ENCODE measurements at regions of chr2 and their contacts with region 1.

Region 1: DNA sequence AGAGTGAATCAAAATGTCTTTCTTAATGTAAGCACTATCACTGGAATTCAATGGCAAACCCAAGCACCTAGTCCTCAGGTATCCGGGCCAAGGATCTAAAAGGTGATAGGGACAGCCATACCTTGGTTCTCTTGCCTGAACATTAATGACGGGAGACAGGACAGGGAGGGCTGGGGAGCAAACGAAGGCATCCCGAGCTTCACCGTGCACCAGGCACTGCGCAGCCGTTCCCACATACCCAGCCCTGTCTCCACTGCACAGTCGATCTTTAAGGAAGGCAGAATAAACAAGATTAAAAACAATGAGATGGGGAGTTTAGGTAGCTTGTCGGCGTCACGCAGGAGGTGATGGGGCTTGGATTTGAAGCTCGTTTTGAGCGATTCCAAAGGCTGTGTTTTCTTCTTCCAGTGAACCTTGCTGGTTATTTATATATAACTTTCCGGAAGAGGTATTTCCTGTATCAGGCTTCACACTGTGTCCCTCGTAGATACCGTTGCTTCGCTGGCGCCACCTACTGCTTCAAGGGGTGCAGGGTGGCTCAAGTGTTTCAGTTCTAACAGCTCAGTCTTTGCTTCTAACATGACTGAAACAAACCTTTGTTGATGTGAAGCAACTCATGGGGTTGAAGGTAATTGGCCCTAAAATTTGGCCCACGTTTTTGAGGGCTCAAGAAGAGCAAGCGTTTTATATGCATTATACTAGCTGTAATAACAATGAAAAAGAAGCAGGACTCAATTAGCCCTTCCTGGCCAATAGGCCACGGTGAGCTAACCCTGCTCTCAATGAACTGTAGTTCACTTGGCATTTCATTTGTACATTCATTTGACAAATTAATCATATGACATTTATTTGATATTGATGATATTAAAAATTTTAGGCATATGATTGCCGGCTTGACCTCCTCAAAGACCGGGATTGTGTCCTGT is 77.4 kb downstream of the DCDC2C start:
- DNase-seq: no peak
- H3K4me3 ChIP-seq: no peak overlapping the region
- H3K27ac ChIP-seq: no peak overlapping the region
- H3K27me3 ChIP-seq: no peaks in the 10 kb centered on the region
- CTCF ChIP-seq: peak; percentile 75

Region 2: GRCh38 chr2:3692381-3692780 is 88.4 kb before region 1 on chr2:
- CTCF ChIA-PET with region 1: interaction called, 18 read pairs
- POLR2A ChIA-PET with region 1: no interaction called
- DNase-seq: no peak
- H3K4me3 ChIP-seq: no peak overlapping the region
- H3K27ac ChIP-seq: no peak overlapping the region
- H3K27me3 ChIP-seq: peaks cover 6% of the 10 kb centered on the region
- CTCF ChIP-seq: peak; percentile 59

Region 3: DNA sequence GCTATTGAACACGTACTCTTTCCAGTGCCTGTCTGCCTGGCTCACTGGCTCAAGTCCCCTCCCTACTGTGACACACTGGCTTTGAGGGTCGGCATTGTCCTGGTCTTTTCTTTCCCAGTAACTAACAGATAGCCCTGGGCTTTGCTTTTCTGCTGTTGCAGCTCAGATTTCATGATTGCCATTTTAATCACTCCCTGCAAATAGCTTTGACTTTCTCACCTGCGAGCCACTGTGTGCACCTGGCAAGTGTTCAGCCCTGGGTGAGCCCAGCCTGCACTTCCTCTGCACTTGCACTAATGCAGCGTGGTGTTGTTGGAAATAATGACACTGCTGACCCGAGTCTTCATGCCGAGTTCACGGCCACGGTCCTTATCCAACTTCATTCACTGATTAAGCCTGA is 24.4 kb before region 1 on chr2:
- CTCF ChIA-PET with region 1: interaction called, 10 read pairs
- POLR2A ChIA-PET with region 1: no interaction called
- DNase-seq: no peak
- H3K4me3 ChIP-seq: no peak overlapping the region
- H3K27ac ChIP-seq: no peak overlapping the region
- H3K27me3 ChIP-seq: peaks cover 7% of the 10 kb centered on the region
- CTCF ChIP-seq: no peak

Region 4: DNA sequence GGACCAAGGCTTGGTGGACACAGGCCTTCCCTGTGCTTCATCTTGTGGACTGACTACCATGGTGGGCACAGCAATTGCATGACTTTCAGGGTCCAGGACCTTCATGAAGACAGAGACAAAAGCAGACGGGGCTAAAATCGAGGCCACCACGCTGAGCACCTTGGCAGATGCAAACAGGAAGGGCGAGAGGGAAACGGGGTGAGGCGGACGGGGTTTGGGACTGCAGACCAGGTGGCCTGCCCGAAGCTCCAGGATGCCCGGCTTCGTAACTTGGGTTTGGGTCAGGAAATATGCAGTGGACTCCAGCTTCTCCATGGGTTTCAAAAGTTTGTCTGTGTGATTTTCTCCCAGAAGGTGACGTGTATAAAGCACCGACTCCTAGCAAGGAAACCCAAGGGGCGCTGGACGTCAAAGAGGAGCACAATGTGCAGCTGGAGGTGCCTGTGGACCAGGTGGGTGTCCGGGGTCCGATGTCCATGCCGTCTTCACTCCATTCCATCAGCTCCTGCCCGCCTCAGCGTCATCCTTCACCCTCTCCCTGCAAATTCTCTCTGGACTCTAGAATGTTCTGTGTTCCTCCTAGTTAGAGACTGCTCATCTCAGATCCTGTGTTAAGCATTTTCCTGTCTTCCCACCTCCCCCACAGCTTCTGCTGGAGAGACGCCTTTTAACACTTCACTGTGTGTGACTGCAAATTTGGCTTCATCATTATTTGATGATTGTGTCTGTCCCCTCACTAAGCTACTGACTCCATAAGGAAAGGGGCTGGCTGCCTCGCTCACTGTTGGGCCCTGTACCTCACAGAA is 11.6 kb before region 1 on chr2:
- CTCF ChIA-PET with region 1: interaction called, 18 read pairs
- POLR2A ChIA-PET with region 1: no interaction called
- DNase-seq: no peak
- H3K4me3 ChIP-seq: no peak overlapping the region
- H3K27ac ChIP-seq: no peak overlapping the region
- H3K27me3 ChIP-seq: peaks cover 3% of the 10 kb centered on the region
- CTCF ChIP-seq: no peak

Region 5: DNA sequence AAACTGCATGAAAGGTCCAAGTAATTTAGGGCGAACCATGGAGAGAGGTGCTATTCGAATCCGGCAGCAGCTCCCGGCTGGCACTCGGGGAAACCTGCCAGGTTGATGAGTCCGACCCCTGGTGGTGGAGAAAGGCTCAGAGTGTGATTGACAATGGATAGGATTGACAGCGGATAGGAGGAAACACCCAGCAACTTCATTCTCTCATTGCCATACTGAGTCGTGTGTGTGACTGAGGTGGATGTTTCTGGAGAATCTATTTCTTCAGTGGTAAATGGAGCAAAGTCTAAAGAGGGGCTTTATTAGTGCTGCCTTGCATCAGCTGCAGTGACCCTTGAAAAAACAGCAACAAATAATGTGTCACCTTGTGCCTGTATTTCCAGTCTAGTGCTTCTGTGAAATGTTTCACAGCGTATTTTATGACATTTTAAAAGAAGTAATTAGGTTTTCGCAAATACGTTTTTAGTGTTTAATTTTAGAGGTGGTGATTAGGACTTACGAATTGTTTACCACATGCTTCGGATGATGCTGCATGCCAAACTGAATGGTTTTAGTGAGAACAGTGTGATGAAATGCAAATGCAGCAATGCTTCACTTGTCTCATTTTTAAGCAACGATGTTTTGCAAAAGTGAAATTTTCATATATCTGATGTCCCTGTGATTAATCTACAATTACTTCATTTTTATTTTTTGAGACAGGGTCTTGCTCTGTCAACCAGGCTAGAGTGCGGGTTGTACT is 24.6 kb after region 1 on chr2:
- CTCF ChIA-PET with region 1: interaction called, 19 read pairs
- POLR2A ChIA-PET with region 1: no interaction called
- DNase-seq: no peak
- H3K4me3 ChIP-seq: no peak overlapping the region
- H3K27ac ChIP-seq: no peak overlapping the region
- H3K27me3 ChIP-seq: no peaks in the 10 kb centered on the region
- CTCF ChIP-seq: peak; percentile 38

Measured in AG04450 (cell line).